Transverse colon (tissue), 4 donors: ENCODE measurements at regions of chr4 and their contacts with region 1.

Region 1: GRCh38 chr4:64158648-64159326 is 250.5 kb downstream of the TECRL start:
- DNase-seq: peak; percentile 29
- H3K4me3 ChIP-seq: peak overlapping the region in 1 of 4 donors; percentile 30
- H3K27ac ChIP-seq: no peak overlapping the region
- H3K4me1 ChIP-seq: no peaks in the 10 kb centered on the region
- H3K27me3 ChIP-seq: no peaks in the 10 kb centered on the region
- CTCF ChIP-seq: peak; percentile 44 to 73 (median 71)
- EP300 ChIP-seq: no peak
- POLR2A ChIP-seq: no peak

Region 2: GRCh38 chr4:64520423-64520822 is 361.6 kb after region 1 on chr4:
- in situ Hi-C with region 1: loop called in 3 of 4 experiments (anchors 25 kb)
- intact Hi-C with region 1: no loop called
- DNase-seq: no peak
- H3K4me3 ChIP-seq: no peak overlapping the region
- H3K27ac ChIP-seq: no peak overlapping the region
- H3K4me1 ChIP-seq: no peaks in the 10 kb centered on the region
- H3K27me3 ChIP-seq: no peaks in the 10 kb centered on the region
- CTCF ChIP-seq: no peak
- EP300 ChIP-seq: no peak
- POLR2A ChIP-seq: no peak

Region 3: GRCh38 chr4:64539234-64539849 is 380.6 kb after region 1 on chr4:
- in situ Hi-C with region 1: loop called in 3 of 4 experiments (anchors 10 to 25 kb)
- intact Hi-C with region 1: loop called (anchors 5 kb)
- DNase-seq: peak; percentile 22
- H3K4me3 ChIP-seq: no peak overlapping the region
- H3K27ac ChIP-seq: no peak overlapping the region
- H3K4me1 ChIP-seq: no peaks in the 10 kb centered on the region
- H3K27me3 ChIP-seq: no peaks in the 10 kb centered on the region
- CTCF ChIP-seq: peak; percentile 43 to 76 (median 63)
- EP300 ChIP-seq: no peak
- POLR2A ChIP-seq: no peak